ENCODE measurements at regions of chr12 and their contacts with region 1.

Region 1: DNA sequence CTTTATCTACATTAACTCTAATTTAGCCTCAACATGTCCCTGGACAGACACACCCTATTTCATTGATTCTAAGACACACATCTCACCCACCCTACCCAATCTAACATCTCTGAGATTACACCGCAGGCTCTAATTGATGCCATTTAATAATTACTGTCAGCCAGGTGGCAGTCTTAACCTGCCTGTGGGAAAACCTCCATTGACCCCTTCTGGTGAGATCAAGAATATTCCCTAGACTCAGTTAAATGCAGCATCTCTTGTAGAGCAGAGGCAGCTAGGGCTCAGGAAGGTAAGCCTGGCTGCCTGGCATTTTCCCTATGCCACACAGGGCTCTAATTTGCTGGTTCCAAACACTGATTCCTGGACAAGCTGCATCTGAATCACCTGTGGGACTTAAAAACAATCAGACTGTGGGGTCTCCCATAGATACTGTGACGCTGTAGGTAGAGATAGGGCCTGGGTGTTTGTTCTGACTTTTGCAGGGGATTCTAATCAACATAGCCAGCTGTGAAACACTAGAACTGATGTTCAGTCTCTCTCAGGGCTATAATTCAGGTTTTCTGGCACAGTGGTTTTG is 14.3 kb downstream of the MCRS1 start:
- DNase-seq: no peak
- ATAC-seq: peak; percentile 62
- H3K4me3 Mint-ChIP-seq: no peak overlapping the region
- H3K27ac Mint-ChIP-seq: no peak overlapping the region
- H3K4me1 Mint-ChIP-seq: peaks cover 3% of the 10 kb centered on the region; the same call in 1 of the 2 replicates
- H3K27me3 Mint-ChIP-seq: peaks cover 33% of the 10 kb centered on the region
- CTCF ChIP-seq: no peak

Region 2: GRCh38 chr12:49331380-49332222 is 222.0 kb before region 1 on chr12:
- CTCF ChIA-PET with region 1: interaction called, 26 read pairs
- POLR2A ChIA-PET with region 1: no interaction called
- DNase-seq: peak; percentile 77
- ATAC-seq: peak; percentile 76
- H3K4me3 Mint-ChIP-seq: peak overlapping the region; percentile 77; the same call in 1 of the 2 replicates
- H3K27ac Mint-ChIP-seq: no peak overlapping the region
- H3K4me1 Mint-ChIP-seq: peaks cover 20% of the 10 kb centered on the region
- H3K27me3 Mint-ChIP-seq: peaks cover 52% of the 10 kb centered on the region
- CTCF ChIP-seq: peak; percentile 42; the same call in 1 of the 2 replicates

Region 3: DNA sequence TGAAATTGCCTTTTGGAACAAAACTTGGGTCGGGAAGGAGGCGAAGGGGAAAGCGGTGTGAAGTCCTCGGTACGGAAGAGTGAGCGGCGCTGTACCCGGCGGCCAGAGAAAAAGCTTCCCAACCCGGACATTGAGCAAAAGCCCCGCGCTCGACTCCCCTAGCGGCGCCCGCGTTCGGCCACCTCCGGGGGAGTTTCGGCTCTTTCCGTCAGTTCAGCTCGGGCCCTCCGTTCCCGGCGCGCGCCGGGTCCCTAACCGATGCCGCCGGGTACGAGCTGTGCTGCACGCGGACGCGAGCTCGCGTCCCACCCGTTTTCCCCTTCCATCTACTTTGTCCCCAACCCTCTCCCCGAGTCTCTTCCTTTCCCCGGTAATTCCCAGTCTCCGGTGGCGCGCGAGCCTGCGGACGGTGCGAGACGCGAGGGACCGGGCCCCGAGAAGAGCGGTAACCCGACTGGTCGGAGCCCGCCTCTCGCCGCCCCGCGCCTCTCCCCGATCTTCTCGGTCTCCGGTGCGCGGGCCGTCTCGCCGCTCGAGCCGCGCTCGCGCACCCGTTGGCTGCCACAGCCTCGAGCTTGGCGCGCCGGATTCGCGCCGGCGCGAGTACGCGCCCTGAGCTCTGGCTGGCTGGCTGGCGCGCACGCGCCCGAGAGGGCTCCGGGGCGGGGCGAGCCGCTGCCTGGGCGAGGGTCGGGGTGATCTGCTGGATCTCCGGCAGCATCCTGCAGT is 186.8 kb before region 1 on chr12:
- CTCF ChIA-PET with region 1: interaction called, 23 read pairs
- POLR2A ChIA-PET with region 1: interaction called, 3 read pairs
- DNase-seq: peak; percentile 92
- ATAC-seq: peak; percentile 89
- H3K4me3 Mint-ChIP-seq: peak overlapping the region; percentile 89
- H3K27ac Mint-ChIP-seq: peak overlapping the region; percentile 97
- H3K4me1 Mint-ChIP-seq: peaks cover 30% of the 10 kb centered on the region
- H3K27me3 Mint-ChIP-seq: peaks cover 12% of the 10 kb centered on the region
- CTCF ChIP-seq: no peak

Region 4: DNA sequence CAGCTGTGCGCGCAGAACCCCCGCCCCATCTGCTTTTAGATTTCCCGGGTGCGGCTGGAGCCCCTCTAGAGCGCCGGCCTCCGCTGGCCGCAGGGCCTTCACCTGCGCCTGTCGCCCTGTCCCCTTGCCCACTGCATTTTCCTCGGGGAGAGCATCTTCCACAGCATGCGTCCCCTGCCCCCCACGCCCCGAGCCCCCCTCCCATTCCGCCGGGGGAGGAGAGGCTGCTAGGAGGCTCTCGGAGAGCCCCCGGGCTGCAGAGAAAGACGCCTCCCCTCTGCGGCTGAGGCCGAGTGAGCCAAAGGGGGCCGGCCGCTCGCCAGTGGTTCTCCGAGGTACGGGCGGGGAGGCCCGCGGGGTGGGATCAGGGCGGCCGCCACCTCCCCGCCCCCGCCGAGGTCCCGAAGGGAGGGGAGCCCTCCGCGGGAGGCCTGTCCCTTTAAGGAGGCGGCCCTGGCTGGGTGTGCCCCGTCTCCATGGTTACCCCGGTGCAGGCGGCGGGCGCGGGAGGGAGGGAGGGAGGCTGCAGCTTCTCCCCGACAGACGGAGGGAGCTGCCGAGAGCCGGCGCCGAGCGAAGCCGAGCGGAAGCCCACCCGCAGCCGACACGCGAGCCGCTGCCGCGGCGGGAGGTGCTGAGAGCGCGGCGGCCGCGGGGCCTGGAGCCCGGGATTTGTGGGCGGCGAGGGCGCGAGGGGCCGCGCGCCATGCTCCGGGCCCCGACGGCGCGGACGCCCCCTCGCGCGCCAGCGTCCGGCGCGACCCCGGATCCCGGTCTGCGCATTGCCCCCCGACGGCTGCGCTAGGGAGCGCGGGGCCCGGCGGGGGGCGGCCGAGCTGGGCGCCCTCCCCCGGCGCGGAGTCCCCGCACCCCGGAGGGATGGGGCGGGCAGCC is 14.8 kb before region 1 on chr12 and contains the start of gene KCNH3:
- CTCF ChIA-PET with region 1: interaction called, 26 read pairs
- POLR2A ChIA-PET with region 1: no interaction called
- DNase-seq: peak; percentile 75
- ATAC-seq: peak; percentile 25
- H3K4me3 Mint-ChIP-seq: peak within 1 kb of the TSS; percentile 71
- H3K27ac Mint-ChIP-seq: no peak within 1 kb of the TSS
- H3K4me1 Mint-ChIP-seq: peaks cover 31% of the 10 kb centered on the region
- H3K27me3 Mint-ChIP-seq: peaks cover 92% of the 10 kb centered on the region
- CTCF ChIP-seq: no peak
- total RNA-seq, gene KCNH3: 0.27 to 0.44 TPM (median 0.44 TPM) in 3 replicates

Region 5: GRCh38 chr12:49567611-49568441 is 14.2 kb after region 1 on chr12 and contains the start of gene MCRS1:
- CTCF ChIA-PET with region 1: interaction called, 13 read pairs
- POLR2A ChIA-PET with region 1: interaction called, 3 read pairs
- DNase-seq: peak; percentile 81
- ATAC-seq: peak; percentile 74
- H3K4me3 Mint-ChIP-seq: peak within 1 kb of the TSS; percentile 98
- H3K27ac Mint-ChIP-seq: peak within 1 kb of the TSS; percentile 99
- H3K4me1 Mint-ChIP-seq: peaks cover 12% of the 10 kb centered on the region
- H3K27me3 Mint-ChIP-seq: no peaks in the 10 kb centered on the region
- CTCF ChIP-seq: no peak
- total RNA-seq, gene MCRS1: 94.8 to 105 TPM (median 96.5 TPM) in 3 replicates

Region 6: GRCh38 chr12:49609746-49610089 is 56.1 kb after region 1 on chr12:
- CTCF ChIA-PET with region 1: interaction called, 11 read pairs
- POLR2A ChIA-PET with region 1: no interaction called
- DNase-seq: no peak
- ATAC-seq: peak; percentile 44
- H3K4me3 Mint-ChIP-seq: no peak overlapping the region
- H3K27ac Mint-ChIP-seq: no peak overlapping the region
- H3K4me1 Mint-ChIP-seq: 0 out of 2 replicates have a peak, but pooled peaks cover 2% of the 10 kb centered on the region
- H3K27me3 Mint-ChIP-seq: peaks cover 17% of the 10 kb centered on the region
- CTCF ChIP-seq: no peak

Region 7: GRCh38 chr12:49623142-49623904 is 69.7 kb after region 1 on chr12 and contains the start of gene PRPF40B:
- CTCF ChIA-PET with region 1: interaction called, 21 read pairs
- POLR2A ChIA-PET with region 1: no interaction called
- DNase-seq: peak; percentile 92
- ATAC-seq: peak; percentile 84
- H3K4me3 Mint-ChIP-seq: peak within 1 kb of the TSS; percentile 90
- H3K27ac Mint-ChIP-seq: peak within 1 kb of the TSS; percentile 92
- H3K4me1 Mint-ChIP-seq: peaks cover 35% of the 10 kb centered on the region
- H3K27me3 Mint-ChIP-seq: no peaks in the 10 kb centered on the region
- CTCF ChIP-seq: peak; percentile 47; the same call in 1 of the 2 replicates
- total RNA-seq, gene PRPF40B: 38.0 to 46.0 TPM (median 40.5 TPM) in 3 replicates

Measured in WTC11 (cell line).